ENCODE measurements at regions of chr6 and their contacts with region 1.

Region 1: GRCh38 chr6:150891888-150892485 is 26.5 kb downstream of the MTHFD1L start:
- DNase-seq: peak; percentile 26 to 66 (median 41)
- H3K4me3 ChIP-seq: no peak overlapping the region
- H3K4me3 Mint-ChIP-seq: no peak overlapping the region
- H3K27ac ChIP-seq: no peak overlapping the region
- H3K27ac Mint-ChIP-seq: peak overlapping the region in 1 of 8 donors; percentile 12
- H3K4me1 ChIP-seq: peaks cover 15% of the 10 kb centered on the region
- H3K4me1 Mint-ChIP-seq: peaks cover 15 to 25% (median 17%) of the 10 kb centered on the region in 3 donors
- H3K27me3 ChIP-seq: no peaks in the 10 kb centered on the region
- H3K27me3 Mint-ChIP-seq: no peaks in the 10 kb centered on the region

Region 2: GRCh38 chr6:150902142-150902776 is 10.3 kb after region 1 on chr6:
- CTCF ChIA-PET with region 1: interaction called, 15 read pairs
- POLR2A ChIA-PET with region 1: no interaction called
- DNase-seq: no peak
- H3K4me3 ChIP-seq: no peak overlapping the region
- H3K4me3 Mint-ChIP-seq: no peak overlapping the region
- H3K27ac ChIP-seq: no peak overlapping the region
- H3K27ac Mint-ChIP-seq: peak overlapping the region in 1 of 8 donors; percentile 69
- H3K4me1 ChIP-seq: no peaks in the 10 kb centered on the region
- H3K4me1 Mint-ChIP-seq: no peaks in the 10 kb centered on the region
- H3K27me3 ChIP-seq: no peaks in the 10 kb centered on the region
- H3K27me3 Mint-ChIP-seq: no peaks in the 10 kb centered on the region

Region 3: DNA sequence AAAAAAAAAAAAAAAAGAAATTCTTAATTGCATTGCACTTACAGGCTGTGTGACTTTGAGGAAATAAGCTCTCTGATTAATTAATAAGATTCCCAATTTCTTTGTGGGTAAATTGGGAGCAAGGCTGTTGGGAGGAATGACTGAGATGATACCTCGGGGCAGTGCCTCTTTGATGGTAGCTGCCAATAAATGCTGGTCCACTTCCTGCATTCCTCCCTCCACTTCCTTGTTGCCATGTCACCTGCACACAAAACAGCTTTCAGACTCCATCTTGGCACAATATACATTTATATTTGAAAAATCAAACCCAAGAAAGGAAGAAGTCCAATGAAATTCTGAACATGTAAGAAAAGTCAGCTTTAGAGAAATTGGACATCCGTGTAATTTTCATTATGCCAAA is 18.6 kb after region 1 on chr6:
- CTCF ChIA-PET with region 1: interaction called, 10 read pairs
- POLR2A ChIA-PET with region 1: no interaction called
- DNase-seq: no peak
- H3K4me3 ChIP-seq: no peak overlapping the region
- H3K4me3 Mint-ChIP-seq: no peak overlapping the region
- H3K27ac ChIP-seq: no peak overlapping the region
- H3K27ac Mint-ChIP-seq: no peak overlapping the region
- H3K4me1 ChIP-seq: no peaks in the 10 kb centered on the region
- H3K4me1 Mint-ChIP-seq: no peaks in the 10 kb centered on the region
- H3K27me3 ChIP-seq: no peaks in the 10 kb centered on the region
- H3K27me3 Mint-ChIP-seq: no peaks in the 10 kb centered on the region

Region 4: DNA sequence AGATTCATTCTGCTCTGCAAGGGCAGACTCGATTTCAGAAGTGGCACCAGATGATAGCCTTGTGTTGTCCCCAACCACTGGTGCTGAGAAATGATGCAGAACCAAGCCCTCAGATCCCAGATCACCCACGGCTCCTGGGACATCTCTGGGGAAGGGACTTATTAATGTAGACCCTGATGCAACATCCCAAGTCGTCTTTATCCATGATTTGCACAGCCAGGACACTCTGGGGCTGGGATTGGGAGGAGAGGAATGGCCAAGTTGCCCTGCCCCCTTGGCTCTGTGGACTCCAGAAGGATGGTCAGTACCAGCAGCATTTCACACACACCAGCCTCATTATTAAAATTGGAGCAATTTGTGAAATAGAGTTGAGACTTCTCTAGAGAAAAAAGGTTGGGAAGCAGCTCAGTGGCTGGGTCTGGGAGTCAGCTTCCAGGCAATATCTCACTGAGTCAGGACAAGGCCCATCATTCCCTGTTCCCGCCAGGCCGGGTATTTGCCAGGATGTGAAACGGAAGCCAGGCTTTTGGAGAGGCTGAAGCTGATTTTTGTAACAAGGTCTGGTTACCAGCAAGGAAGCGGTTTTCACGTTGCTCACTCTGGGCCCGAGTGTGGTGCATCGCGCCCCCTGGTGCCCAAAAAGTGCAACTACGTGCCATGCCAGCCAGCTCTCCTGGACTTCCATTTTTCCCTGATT is 432.0 kb after region 1 on chr6:
- CTCF ChIA-PET with region 1: interaction called, 143 read pairs
- POLR2A ChIA-PET with region 1: interaction called, 3 read pairs
- DNase-seq: peak; percentile 59 to 76 (median 62)
- H3K4me3 ChIP-seq: no peak overlapping the region
- H3K4me3 Mint-ChIP-seq: peak overlapping the region; percentile 45 to 72 (median 62)
- H3K27ac ChIP-seq: no peak overlapping the region
- H3K27ac Mint-ChIP-seq: peak overlapping the region in 1 of 8 donors; percentile 57
- H3K4me1 ChIP-seq: peaks cover 10% of the 10 kb centered on the region
- H3K4me1 Mint-ChIP-seq: peaks cover 20 to 27% (median 24%) of the 10 kb centered on the region in 3 donors
- H3K27me3 ChIP-seq: peaks cover 20% of the 10 kb centered on the region
- H3K27me3 Mint-ChIP-seq: peaks cover 43 to 69% of the 10 kb centered on the region in 2 donors

Region 5: GRCh38 chr6:151330134-151330696 is 438.2 kb after region 1 on chr6:
- CTCF ChIA-PET with region 1: interaction called, 143 read pairs
- POLR2A ChIA-PET with region 1: interaction called, 3 read pairs
- DNase-seq: no peak
- H3K4me3 ChIP-seq: no peak overlapping the region
- H3K4me3 Mint-ChIP-seq: no peak overlapping the region
- H3K27ac ChIP-seq: no peak overlapping the region
- H3K27ac Mint-ChIP-seq: no peak overlapping the region
- H3K4me1 ChIP-seq: peaks cover under 1% of the 10 kb centered on the region
- H3K4me1 Mint-ChIP-seq: peaks cover 12 to 17% (median 14%) of the 10 kb centered on the region in 3 donors
- H3K27me3 ChIP-seq: peaks cover 14% of the 10 kb centered on the region
- H3K27me3 Mint-ChIP-seq: peaks cover 16 to 40% of the 10 kb centered on the region in 2 donors